Dendritic cell treated with granulocyte-macrophage colony-stimulating factor and Interleukin-4, amounts not matched to agents 40 ng/mL and 50 ng/mL, for 4 days (primary cell): ENCODE measurements at regions of chr1 and their contacts with region 1.

Region 1: DNA sequence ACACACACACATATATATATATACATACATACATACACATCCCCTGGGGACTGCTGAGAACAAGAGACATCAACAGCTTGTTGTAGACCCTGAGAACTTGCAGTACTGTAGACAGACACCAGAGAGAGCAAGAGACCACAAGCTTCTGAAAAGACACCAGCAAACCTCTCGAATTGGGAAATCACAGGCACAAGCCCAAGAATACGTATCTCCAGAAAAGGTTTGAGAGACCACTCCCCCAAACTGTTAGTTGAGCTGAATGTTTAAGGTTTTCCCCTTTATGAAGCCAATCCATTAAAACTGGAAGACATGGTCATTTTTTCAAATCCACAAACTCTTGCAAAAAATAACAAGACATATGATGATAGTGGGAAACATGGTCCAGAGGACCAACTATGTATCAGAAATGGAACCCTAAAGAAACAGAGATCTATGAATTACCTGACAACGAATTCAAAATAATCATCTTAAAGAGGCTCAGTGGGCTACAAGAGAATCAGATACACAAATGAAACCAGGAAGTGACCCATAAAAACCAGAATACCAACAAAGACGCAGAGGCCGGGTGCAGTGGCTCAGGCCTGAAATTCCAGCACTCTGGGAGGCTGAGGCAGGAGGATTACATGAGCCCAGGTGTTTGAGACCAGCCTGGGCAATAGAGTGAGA is 45.1 kb downstream of the SLC2A1 start:
- H3K4me3 Mint-ChIP-seq: no peak overlapping the region
- H3K27ac Mint-ChIP-seq: no peak overlapping the region
- H3K4me1 Mint-ChIP-seq: no peaks in the 10 kb centered on the region
- H3K27me3 Mint-ChIP-seq: peaks cover 4% of the 10 kb centered on the region

Region 2: DNA sequence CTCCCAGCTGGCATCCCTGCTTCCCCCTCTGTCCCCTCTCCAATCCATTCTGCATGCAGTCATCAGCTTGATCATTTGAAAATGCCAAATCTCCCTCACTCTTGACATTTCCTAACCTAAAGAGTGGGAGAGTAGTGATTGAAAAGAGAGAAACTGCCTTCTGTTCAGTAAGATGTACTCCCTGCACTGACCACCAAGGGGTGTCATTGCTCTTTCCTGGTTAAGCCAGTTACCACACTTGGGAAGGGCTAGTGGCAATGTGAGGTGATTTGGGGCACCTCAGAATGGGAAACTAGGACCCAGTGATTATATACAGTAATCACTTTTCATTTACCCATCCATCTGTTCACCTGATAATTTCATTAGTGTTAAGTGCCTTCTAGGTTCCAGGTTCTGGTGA is 135.7 kb before region 1 on chr1:
- intact Hi-C with region 1: loop called (anchors 5 kb)
- H3K4me3 Mint-ChIP-seq: no peak overlapping the region
- H3K27ac Mint-ChIP-seq: no peak overlapping the region
- H3K4me1 Mint-ChIP-seq: peaks cover 10% of the 10 kb centered on the region
- H3K27me3 Mint-ChIP-seq: no peaks in the 10 kb centered on the region

Region 3: GRCh38 chr1:42860339-42861013 is 53.1 kb before region 1 on chr1:
- intact Hi-C with region 1: no loop called
- H3K4me3 Mint-ChIP-seq: no peak overlapping the region
- H3K27ac Mint-ChIP-seq: no peak overlapping the region
- H3K4me1 Mint-ChIP-seq: no peaks in the 10 kb centered on the region
- H3K27me3 Mint-ChIP-seq: peaks cover 15% of the 10 kb centered on the region